HCT116 (cell line): ENCODE measurements at regions of chr11 and their contacts with region 1.

Region 1: DNA sequence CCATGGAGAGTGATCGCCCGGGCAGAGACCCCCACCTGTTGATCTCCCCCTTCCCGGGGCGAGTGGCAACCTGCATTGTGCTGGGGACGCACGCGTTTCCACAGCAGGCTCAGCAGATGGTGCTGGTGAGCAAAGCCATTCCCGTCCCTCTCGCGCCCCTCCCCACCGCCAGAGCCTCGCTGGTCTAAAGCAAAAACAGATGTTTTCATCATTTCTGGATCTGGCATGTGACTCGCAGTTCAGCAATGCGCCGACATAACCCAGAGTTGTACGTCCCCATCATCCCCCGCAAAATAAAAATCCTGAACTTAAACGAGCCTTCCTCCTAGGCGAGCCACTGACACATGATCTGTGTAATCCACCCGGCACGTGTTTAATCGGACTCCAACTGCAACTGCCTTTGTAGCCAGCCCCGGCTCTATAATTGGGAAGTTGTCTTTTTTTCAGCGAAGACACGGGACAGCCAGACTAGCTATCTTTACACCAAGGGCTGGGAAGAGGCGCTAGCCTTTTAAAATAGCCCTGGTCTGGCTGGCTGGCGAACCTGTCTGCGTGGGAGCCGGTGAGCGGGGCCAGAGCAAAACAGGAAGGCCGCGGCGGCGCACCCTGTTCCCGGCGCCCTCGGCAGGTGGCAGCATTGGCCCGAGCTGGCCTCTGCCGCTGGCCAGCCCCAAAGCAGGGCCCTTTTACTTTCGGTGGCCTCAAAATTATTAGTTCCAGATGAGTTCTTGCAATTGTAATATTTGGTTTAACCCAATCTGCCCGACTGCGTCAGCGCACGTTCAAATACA is 203.0 kb upstream of the SORL1-AS1 start:
- DNase-seq: peak; percentile 60
- ATAC-seq: peak; percentile 92
- H3K4me3 ChIP-seq: peak overlapping the region; percentile 28 to 51
- H3K27ac ChIP-seq: peak overlapping the region; percentile 62
- H3K4me1 ChIP-seq: peaks cover 19 to 34% of the 10 kb centered on the region in 2 experiments
- H3K27me3 ChIP-seq: no peaks in the 10 kb centered on the region
- CTCF ChIP-seq: peak; percentile 83 to 90 (median 84)
- POLR2A ChIP-seq: no peak
- RAD21 ChIP-seq: peak; percentile 99

Region 2: DNA sequence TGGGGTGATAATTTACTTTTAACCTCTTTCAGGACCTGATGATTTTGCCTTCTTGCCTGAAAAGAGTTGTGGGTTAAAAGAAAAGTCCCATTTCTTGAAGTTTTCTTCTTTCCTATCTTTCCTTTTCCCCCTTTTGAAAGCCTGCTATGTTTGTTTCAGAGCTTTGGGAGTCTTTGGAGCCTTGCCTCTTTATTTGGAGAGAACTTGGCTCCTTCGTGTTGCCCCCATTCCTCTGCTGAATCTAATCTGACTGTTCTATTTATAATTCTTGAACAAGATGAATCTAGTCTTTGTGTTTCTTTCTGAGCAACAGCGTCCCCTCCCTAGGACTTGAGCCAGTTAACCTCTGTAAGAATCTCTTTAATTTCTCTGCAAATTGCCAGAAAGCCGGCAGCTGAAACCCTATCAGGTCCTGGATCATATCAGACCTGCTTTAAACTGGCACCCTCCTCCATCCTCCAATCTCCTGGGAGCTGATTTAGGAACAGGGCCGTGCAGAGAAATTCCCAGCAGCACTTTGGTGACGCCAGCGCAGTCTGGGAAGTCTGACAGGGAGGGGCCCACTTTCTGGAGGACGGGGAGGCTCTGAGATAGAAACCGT is 86.1 kb after region 1 on chr11:
- CTCF ChIA-PET with region 1: no interaction called
- POLR2A ChIA-PET with region 1: no interaction called
- RAD21 ChIA-PET with region 1: no interaction called
- intact Hi-C with region 1: no loop called
- DNase-seq: no peak
- ATAC-seq: no peak
- H3K4me3 ChIP-seq: no peak overlapping the region
- H3K27ac ChIP-seq: no peak overlapping the region
- H3K4me1 ChIP-seq: no peaks in the 10 kb centered on the region
- H3K27me3 ChIP-seq: no peaks in the 10 kb centered on the region
- CTCF ChIP-seq: no peak
- POLR2A ChIP-seq: no peak
- RAD21 ChIP-seq: no peak

Region 3: GRCh38 chr11:121780971-121781370 is 125.2 kb after region 1 on chr11:
- CTCF ChIA-PET with region 1: no interaction called
- POLR2A ChIA-PET with region 1: no interaction called
- RAD21 ChIA-PET with region 1: no interaction called
- intact Hi-C with region 1: no loop called
- DNase-seq: no peak
- ATAC-seq: no peak
- H3K4me3 ChIP-seq: no peak overlapping the region
- H3K27ac ChIP-seq: no peak overlapping the region
- H3K4me1 ChIP-seq: no peaks in the 10 kb centered on the region
- H3K27me3 ChIP-seq: no peaks in the 10 kb centered on the region
- CTCF ChIP-seq: no peak
- POLR2A ChIP-seq: no peak
- RAD21 ChIP-seq: no peak

Region 4: DNA sequence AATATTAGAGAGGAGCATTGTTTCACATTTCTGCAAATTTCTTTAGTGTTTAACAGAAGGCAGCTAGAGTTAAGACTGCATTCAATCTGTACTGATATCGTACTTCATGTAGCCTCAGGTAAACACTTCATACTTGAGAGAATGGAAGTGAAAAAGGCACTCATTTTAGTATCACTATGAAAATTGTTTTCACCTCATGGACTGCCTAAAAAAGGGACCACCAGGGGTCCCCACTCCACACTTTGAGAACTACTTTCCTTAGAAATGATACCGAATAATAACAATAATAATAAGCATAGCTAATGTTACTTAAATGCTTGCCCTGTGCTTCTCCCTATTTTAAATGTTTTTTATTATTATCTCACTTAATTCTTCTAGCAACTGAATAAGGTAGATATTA is 365.2 kb after region 1 on chr11:
- CTCF ChIA-PET with region 1: interaction called, 3 read pairs
- POLR2A ChIA-PET with region 1: no interaction called
- RAD21 ChIA-PET with region 1: no interaction called
- intact Hi-C with region 1: loop called (anchors 5 kb)
- DNase-seq: no peak
- ATAC-seq: no peak
- H3K4me3 ChIP-seq: no peak overlapping the region
- H3K27ac ChIP-seq: no peak overlapping the region
- H3K4me1 ChIP-seq: peaks cover 16 to 36% of the 10 kb centered on the region in 2 experiments; a peak in 3 of 4 replicates
- H3K27me3 ChIP-seq: no peaks in the 10 kb centered on the region
- CTCF ChIP-seq: peak; percentile 4 to 46 (median 40); a peak in 4 of 6 replicates
- POLR2A ChIP-seq: no peak
- RAD21 ChIP-seq: peak; percentile 46

Region 5: DNA sequence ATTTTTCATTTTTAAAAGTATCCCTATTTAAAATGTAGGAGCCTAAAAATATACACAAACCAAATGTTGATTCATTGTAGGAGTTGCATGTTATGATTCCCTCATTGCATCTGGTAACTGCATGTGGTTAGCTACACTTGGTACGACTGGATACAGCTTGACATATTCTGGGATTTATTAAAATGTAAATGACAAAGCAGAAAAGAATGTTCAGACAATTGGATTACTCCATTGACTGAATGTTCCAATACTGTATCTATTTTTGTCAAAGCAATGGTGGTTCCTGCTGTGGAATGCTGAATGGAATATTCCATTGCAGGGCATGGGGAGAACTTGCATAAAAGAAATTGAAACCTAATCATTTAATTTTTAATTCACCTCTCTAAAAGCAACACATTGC is 429.5 kb after region 1 on chr11:
- CTCF ChIA-PET with region 1: no interaction called
- POLR2A ChIA-PET with region 1: no interaction called
- RAD21 ChIA-PET with region 1: no interaction called
- intact Hi-C with region 1: loop called (anchors 5 kb)
- DNase-seq: no peak
- ATAC-seq: peak; percentile 41; the same call in 1 of the 2 replicates
- H3K4me3 ChIP-seq: no peak overlapping the region
- H3K27ac ChIP-seq: peak overlapping the region; percentile 26; the same call in 1 of the 2 replicates
- H3K4me1 ChIP-seq: peaks cover 12 to 39% of the 10 kb centered on the region in 2 experiments
- H3K27me3 ChIP-seq: no peaks in the 10 kb centered on the region
- CTCF ChIP-seq: no peak
- POLR2A ChIP-seq: no peak
- RAD21 ChIP-seq: no peak

Region 6: DNA sequence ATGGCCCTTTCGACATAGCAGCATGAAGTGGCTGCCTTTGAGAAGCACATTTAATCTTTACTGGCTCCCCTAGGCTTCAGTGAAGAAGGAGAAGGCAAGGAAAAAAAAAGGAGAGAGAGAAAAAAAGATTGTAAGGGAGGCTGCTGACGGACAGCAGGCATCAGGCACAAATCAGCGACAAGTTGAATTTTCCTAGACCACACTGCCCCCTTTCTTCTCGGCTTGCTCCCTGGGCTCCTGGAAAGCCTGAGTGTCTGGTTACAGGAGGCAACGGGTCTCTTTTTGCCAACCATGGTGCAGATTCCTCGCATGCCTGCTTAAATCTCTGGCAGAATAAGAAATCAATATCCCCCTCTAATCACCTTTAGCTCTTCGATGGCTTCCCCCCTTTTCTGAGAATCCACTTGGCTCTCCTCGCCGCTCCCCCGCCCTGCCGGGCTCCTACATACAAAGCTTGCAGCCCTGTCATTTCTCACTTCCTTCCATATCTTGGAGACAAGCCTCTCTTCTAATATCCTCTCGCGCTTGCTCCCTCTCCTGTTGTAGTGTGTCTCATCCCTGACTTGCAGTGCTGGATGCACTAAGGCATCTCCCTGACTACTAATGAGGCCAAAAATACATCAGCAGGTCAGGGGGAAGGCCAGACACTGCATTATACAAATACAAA is 446.0 kb after region 1 on chr11:
- CTCF ChIA-PET with region 1: interaction called, 4 read pairs
- POLR2A ChIA-PET with region 1: no interaction called
- RAD21 ChIA-PET with region 1: no interaction called
- intact Hi-C with region 1: loop called (anchors 5 kb)
- DNase-seq: no peak
- ATAC-seq: no peak
- H3K4me3 ChIP-seq: no peak overlapping the region
- H3K27ac ChIP-seq: peak overlapping the region; percentile 70
- H3K4me1 ChIP-seq: peaks cover 60 to 86% of the 10 kb centered on the region in 2 experiments
- H3K27me3 ChIP-seq: no peaks in the 10 kb centered on the region
- CTCF ChIP-seq: peak in 2 of 3 experiments; percentile 13 to 35; a peak in 3 of 6 replicates
- POLR2A ChIP-seq: no peak
- RAD21 ChIP-seq: peak; percentile 41

Region 7: DNA sequence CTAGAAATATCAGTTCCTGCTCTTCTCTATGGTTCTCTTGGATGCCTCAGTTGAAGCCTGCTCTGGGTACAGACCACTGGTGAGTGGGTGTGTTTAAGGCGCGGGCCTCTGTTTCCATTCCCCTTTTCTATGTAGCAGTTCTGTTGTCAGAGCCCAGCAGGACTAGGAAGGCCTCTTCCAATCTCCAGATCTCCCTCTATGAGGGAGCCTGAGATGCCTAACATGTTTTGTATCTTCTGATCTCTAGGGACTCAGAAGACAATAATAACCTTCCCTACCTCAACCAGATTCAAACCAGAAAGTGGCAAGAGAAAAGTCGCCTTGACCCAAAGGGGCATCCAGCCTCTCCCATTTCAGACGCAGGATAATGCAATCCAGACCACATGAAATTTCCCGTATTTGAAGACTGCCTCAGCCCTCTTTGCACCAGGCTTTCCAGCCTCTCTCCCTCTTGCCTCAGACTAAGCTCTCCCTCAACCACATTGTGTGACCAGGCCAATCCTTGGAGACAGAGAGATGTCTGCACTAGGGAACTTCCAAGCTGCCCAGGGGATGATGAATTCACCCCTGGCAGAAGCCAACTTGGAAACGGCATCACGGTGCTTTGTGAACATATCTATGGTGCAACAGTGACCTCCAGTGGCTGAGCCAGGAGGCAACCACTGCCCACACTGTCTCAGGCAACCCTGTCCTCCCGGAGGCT is 849.7 kb after region 1 on chr11:
- CTCF ChIA-PET with region 1: interaction called, 54 read pairs
- POLR2A ChIA-PET with region 1: interaction called, 5 read pairs
- RAD21 ChIA-PET with region 1: interaction called in 1 of 2 experiments, 9 read pairs
- intact Hi-C with region 1: loop called (anchors 1 kb)
- DNase-seq: peak; percentile 58
- ATAC-seq: peak; percentile 99
- H3K4me3 ChIP-seq: no peak overlapping the region
- H3K27ac ChIP-seq: no peak overlapping the region
- H3K4me1 ChIP-seq: peaks cover 0 to 3% of the 10 kb centered on the region in 2 experiments; a peak in 3 of 4 replicates
- H3K27me3 ChIP-seq: no peaks in the 10 kb centered on the region
- CTCF ChIP-seq: peak; percentile 80 to 91 (median 91); a peak in 5 of 6 replicates
- POLR2A ChIP-seq: no peak
- RAD21 ChIP-seq: peak; percentile 98

Region 8: DNA sequence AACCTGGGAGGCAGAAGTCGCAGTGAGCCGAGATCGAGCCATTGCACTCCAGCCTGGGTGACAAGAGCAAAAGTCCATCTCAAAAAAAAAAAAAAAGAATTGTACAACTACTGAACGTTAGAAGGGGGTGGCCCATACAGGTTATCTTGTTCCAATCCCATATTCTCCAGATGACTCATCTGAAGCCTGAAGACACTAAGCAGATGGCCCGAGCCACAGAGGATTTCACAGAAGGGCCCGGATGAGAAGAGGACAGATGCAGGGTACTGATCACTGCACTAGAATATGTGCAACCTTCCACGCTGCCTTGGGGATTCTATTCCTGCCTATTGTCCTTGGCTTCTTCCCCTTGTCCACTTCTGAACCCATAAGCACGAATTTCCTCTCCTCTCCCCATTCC is 928.9 kb after region 1 on chr11:
- CTCF ChIA-PET with region 1: no interaction called
- POLR2A ChIA-PET with region 1: no interaction called
- RAD21 ChIA-PET with region 1: no interaction called
- intact Hi-C with region 1: loop called (anchors 10 kb)
- DNase-seq: no peak
- ATAC-seq: no peak
- H3K4me3 ChIP-seq: no peak overlapping the region
- H3K27ac ChIP-seq: no peak overlapping the region
- H3K4me1 ChIP-seq: peaks cover 5 to 15% of the 10 kb centered on the region in 2 experiments
- H3K27me3 ChIP-seq: no peaks in the 10 kb centered on the region
- CTCF ChIP-seq: no peak
- POLR2A ChIP-seq: no peak
- RAD21 ChIP-seq: no peak